ENCODE measurements at regions of chr7 and their contacts with region 1.

Region 1: DNA sequence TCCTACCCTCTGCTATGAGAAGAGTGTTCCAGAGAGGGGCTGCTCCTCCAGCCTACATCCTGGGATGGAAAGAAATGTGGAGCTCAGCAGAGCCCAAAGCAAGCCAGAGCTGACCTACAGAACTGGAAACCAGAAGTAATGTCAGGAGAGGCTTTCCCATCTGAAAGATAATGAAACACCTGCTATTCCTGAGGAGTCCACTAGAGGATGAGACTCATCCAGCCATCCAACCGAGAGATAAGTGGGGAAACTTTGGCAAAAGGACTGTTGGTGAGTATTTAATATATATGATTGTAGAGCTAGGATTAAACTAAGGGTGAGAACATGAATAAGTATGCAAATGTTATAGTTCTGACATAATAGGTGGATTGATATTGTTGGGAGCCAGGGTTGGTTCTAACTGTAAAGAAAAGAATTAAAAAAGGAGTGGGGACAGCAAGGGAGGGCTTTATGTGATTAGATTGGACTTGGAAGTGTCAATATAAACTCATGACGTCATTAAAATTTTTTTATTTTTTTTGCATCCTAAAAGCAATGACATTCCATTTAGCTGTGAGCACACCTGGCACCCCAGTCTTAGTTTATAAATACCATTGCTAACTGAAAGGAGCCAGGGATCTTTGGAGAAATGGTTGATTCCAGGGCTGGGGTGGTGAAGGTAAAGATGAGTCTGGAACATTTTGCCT is 312.8 kb upstream of the NFE2L3 start:
- DNase-seq: no peak
- ATAC-seq: no peak

Region 2: GRCh38 chr7:25731068-25731845 is 108.0 kb before region 1 on chr7:
- intact Hi-C with region 1: no loop called
- DNase-seq: no peak
- ATAC-seq: no peak

Region 3: GRCh38 chr7:25752967-25753791 is 86.0 kb before region 1 on chr7:
- intact Hi-C with region 1: loop called in 1 of 2 experiments (anchors 10 kb)
- DNase-seq: peak; percentile 33
- ATAC-seq: peak in 1 of 2 donors; percentile 51

Measured in left cardiac atrium (tissue), 4 donors.